CD4-positive, alpha-beta T cell (primary cell): ENCODE measurements at regions of chr7 and their contacts with region 1.

Region 1: DNA sequence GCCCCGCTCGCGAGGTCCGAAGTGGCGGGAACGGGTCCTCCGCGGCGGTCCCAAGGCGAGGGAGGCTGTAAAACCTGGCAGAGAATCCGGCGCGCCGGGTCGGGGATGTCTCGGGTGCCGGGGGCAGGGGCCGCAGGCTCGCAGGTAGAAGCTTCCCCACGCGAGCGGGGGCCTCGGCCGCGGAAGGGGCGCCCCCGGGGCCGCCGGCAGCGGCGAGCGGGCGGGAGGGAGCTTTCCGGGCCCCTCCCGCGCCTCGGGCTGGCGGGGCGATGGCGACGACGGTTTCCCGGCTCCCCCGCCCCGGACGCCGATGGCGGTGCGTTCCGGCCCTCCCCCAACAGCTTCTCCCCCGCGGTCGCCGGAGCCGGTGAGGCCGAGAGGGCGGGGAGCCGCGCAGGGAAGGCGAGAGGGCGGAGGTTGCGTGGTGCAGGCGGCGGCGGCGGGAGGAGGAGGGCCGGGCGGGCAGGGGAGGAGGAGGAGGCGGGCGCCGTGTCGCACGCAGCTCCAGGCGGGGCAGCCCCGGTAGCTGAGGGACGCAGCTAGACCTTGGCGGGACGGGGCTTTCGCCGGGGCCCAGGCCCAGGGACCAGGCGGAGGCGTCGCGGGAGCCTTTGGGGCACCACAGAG is at the start of gene CUL1:
- DNase-seq: peak; percentile 74 to 94 (median 85)
- ATAC-seq: peak; percentile 75
- H3K4me3 ChIP-seq: peak within 1 kb of the TSS; percentile 81
- H3K4me3 Mint-ChIP-seq: peak within 1 kb of the TSS; percentile 91
- H3K27ac ChIP-seq: peak within 1 kb of the TSS; percentile 47 to 73
- H3K27ac Mint-ChIP-seq: peak within 1 kb of the TSS; percentile 88
- H3K4me1 ChIP-seq: peaks cover 33% of the 10 kb centered on the region
- H3K4me1 Mint-ChIP-seq: peaks cover 51% of the 10 kb centered on the region
- H3K27me3 ChIP-seq: no peaks in the 10 kb centered on the region
- H3K27me3 Mint-ChIP-seq: no peaks in the 10 kb centered on the region
- CTCF ChIP-seq: no peak
- total RNA-seq, gene CUL1: 31.0 to 31.2 TPM

Region 2: GRCh38 chr7:148575640-148576411 is 122.7 kb before region 1 on chr7:
- CTCF ChIA-PET with region 1: no interaction called
- POLR2A ChIA-PET with region 1: interaction called, 11 read pairs
- intact Hi-C with region 1: loop called (anchors 2 to 5 kb)
- DNase-seq: peak; percentile 50 to 79 (median 64)
- ATAC-seq: peak; percentile 81
- H3K4me3 ChIP-seq: no peak overlapping the region
- H3K4me3 Mint-ChIP-seq: no peak overlapping the region
- H3K27ac ChIP-seq: no peak overlapping the region
- H3K27ac Mint-ChIP-seq: no peak overlapping the region
- H3K4me1 ChIP-seq: peaks cover 5% of the 10 kb centered on the region
- H3K4me1 Mint-ChIP-seq: peaks cover 4% of the 10 kb centered on the region
- H3K27me3 ChIP-seq: no peaks in the 10 kb centered on the region
- H3K27me3 Mint-ChIP-seq: no peaks in the 10 kb centered on the region
- CTCF ChIP-seq: peak; percentile 82

Region 3: DNA sequence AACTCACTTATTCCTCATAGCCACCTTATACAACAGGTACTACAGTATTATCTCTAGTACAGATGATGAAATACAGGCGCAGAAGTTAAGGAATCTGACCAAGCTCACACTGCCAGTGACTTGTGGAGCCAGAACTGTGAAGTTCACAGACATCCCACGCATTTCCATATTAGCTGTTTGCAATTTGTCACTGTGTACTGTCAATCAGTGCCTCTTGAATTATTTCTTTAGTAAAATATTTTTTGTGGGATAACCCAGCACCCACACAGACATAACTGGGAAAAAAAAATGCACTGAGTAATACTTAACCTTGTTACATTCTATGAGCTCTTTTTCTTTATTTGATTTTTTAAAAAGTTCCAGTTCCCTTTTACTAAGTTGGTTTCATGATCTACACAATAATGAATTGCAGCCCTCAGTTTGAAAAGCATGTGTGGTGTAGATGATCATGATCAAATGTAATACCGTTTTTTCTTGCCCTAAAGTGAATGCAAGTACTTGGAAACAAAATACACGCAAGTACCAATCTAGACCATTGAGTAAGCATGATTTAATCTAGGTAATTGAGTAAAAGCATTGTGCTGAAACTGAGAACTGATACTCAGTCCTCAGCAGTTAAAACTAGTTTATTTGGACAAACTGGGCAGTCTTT is 14.3 kb after region 1 on chr7:
- CTCF ChIA-PET with region 1: interaction called, 3 read pairs
- POLR2A ChIA-PET with region 1: interaction called, 15 read pairs
- intact Hi-C with region 1: loop called in 1 of 2 experiments (anchors 2 kb)
- DNase-seq: no peak
- ATAC-seq: no peak
- H3K4me3 ChIP-seq: no peak overlapping the region
- H3K4me3 Mint-ChIP-seq: no peak overlapping the region
- H3K27ac ChIP-seq: no peak overlapping the region
- H3K27ac Mint-ChIP-seq: peak overlapping the region; percentile 25
- H3K4me1 ChIP-seq: peaks cover 46% of the 10 kb centered on the region
- H3K4me1 Mint-ChIP-seq: peaks cover 94% of the 10 kb centered on the region
- H3K27me3 ChIP-seq: no peaks in the 10 kb centered on the region
- H3K27me3 Mint-ChIP-seq: no peaks in the 10 kb centered on the region
- CTCF ChIP-seq: no peak

Region 4: DNA sequence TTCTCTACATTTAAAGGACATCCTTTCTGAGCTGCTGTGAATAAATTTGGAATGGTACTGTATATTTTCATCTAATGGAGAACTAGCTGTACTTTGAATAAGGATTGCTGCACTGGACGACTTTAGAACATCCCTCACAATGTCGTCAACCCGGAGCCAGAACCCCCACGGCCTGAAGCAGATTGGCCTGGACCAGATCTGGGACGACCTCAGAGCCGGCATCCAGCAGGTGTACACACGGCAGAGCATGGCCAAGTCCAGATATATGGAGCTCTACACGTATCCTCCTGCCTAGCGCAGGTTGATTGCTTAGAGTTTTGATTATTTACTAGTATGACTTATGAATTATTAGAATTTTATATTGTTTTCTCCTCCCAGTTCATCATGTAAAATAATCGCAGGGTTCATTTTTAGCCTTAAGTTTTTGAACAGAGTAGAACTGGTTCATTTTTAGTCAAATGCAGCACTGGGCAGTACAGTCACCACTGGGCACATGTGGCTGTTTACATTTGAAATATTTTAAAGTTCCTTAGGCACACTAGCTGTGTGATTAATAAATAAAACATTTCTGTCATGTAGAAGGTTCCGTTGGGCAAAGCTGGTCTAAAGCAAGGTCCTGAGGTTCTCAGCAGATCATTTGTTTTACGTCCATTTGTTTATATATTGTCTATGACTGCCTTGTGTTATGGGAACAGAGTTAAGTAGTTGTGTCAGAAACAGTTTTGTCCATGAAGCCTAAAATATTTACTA is 31.6 kb after region 1 on chr7:
- CTCF ChIA-PET with region 1: no interaction called
- POLR2A ChIA-PET with region 1: interaction called, 10 read pairs
- intact Hi-C with region 1: loop called in 1 of 2 experiments (anchors 5 kb)
- DNase-seq: no peak
- ATAC-seq: no peak
- H3K4me3 ChIP-seq: no peak overlapping the region
- H3K4me3 Mint-ChIP-seq: no peak overlapping the region
- H3K27ac ChIP-seq: no peak overlapping the region
- H3K27ac Mint-ChIP-seq: no peak overlapping the region
- H3K4me1 ChIP-seq: peaks cover 14% of the 10 kb centered on the region
- H3K4me1 Mint-ChIP-seq: peaks cover 73% of the 10 kb centered on the region
- H3K27me3 ChIP-seq: no peaks in the 10 kb centered on the region
- H3K27me3 Mint-ChIP-seq: no peaks in the 10 kb centered on the region
- CTCF ChIP-seq: no peak

Region 5: DNA sequence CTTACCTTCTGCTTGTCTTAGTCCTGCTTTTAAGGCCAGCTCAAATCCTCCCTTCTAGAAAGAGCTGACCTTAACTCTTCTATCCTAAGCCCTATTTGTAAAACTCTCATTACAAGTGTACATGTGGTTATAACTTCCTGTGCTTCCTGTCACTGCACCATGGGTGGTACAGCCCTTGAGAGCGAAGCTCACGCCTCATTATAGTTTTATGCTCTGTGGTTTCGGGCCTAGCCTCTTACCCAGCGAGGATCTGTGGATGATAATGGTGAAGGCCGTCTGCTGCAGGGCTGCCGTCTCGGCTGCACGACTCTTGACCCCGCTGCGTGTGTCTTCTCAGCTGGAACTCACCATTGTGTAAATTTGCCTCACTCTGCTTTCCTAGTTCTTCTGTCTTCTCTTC is 74.8 kb after region 1 on chr7:
- CTCF ChIA-PET with region 1: interaction called, 4 read pairs
- POLR2A ChIA-PET with region 1: interaction called, 29 read pairs
- intact Hi-C with region 1: loop called in 1 of 2 experiments (anchors 5 kb)
- DNase-seq: peak in 12 of 14 experiments; percentile 7 to 73 (median 24)
- ATAC-seq: peak; percentile 92
- H3K4me3 ChIP-seq: no peak overlapping the region
- H3K4me3 Mint-ChIP-seq: peak overlapping the region; percentile 13
- H3K27ac ChIP-seq: peak overlapping the region; percentile 42 to 66
- H3K27ac Mint-ChIP-seq: peak overlapping the region; percentile 47
- H3K4me1 ChIP-seq: peaks cover 25% of the 10 kb centered on the region
- H3K4me1 Mint-ChIP-seq: peaks cover 29% of the 10 kb centered on the region
- H3K27me3 ChIP-seq: no peaks in the 10 kb centered on the region
- H3K27me3 Mint-ChIP-seq: no peaks in the 10 kb centered on the region
- CTCF ChIP-seq: no peak

Region 6: GRCh38 chr7:148940702-148941597 is 242.4 kb after region 1 on chr7:
- CTCF ChIA-PET with region 1: no interaction called
- POLR2A ChIA-PET with region 1: interaction called, 32 read pairs
- intact Hi-C with region 1: loop called in 1 of 2 experiments (anchors 5 kb)
- DNase-seq: peak; percentile 37 to 87 (median 57)
- ATAC-seq: peak; percentile 69
- H3K4me3 ChIP-seq: peak overlapping the region; percentile 89
- H3K4me3 Mint-ChIP-seq: peak overlapping the region; percentile 97
- H3K27ac ChIP-seq: peak overlapping the region; percentile 87 to 88
- H3K27ac Mint-ChIP-seq: peak overlapping the region; percentile 98
- H3K4me1 ChIP-seq: peaks cover 7% of the 10 kb centered on the region
- H3K4me1 Mint-ChIP-seq: peaks cover 27% of the 10 kb centered on the region
- H3K27me3 ChIP-seq: no peaks in the 10 kb centered on the region
- H3K27me3 Mint-ChIP-seq: no peaks in the 10 kb centered on the region
- CTCF ChIP-seq: no peak

Region 7: DNA sequence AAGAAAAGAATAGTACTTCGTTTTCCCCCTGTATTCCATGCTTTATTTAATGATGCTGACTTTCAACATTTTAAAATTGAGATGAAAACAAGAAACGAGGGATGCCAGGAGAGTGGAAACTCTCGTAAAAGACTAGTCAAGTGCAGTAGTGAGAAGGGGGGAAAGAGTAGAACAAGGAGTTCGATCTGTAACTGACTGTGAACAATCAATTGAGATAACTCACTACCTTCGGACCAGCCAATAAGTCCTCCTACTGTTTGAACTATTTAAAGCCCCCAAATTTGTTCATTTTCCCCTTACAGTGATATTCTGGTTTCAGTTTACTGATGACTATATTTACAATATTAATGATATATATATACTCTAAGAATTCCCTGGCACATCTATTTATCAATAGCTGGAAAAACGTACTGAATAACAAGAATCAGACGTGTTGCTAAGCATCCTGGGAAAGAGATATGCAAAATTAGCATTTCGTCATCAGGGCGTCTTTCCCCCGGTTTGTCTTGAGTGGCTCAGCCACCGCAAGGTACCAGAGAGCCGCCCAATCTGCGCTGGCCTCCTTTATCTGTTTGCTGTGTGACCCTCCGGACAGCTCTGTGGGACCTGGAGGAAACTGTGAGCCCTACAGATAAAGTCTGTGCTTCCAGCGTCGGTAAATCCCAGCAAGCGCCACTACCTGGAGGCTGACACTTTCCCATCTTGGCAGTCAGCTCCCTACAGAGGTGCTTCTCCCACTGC is 288.7 kb after region 1 on chr7:
- CTCF ChIA-PET with region 1: no interaction called
- POLR2A ChIA-PET with region 1: interaction called, 11 read pairs
- intact Hi-C with region 1: loop called in 1 of 2 experiments (anchors 5 kb)
- DNase-seq: peak; percentile 58 to 94 (median 70)
- ATAC-seq: peak; percentile 71
- H3K4me3 ChIP-seq: peak overlapping the region; percentile 95
- H3K4me3 Mint-ChIP-seq: peak overlapping the region; percentile 96
- H3K27ac ChIP-seq: peak overlapping the region; percentile 73 to 94
- H3K27ac Mint-ChIP-seq: peak overlapping the region; percentile 95
- H3K4me1 ChIP-seq: peaks cover 41% of the 10 kb centered on the region
- H3K4me1 Mint-ChIP-seq: peaks cover 55% of the 10 kb centered on the region
- H3K27me3 ChIP-seq: no peaks in the 10 kb centered on the region
- H3K27me3 Mint-ChIP-seq: peaks cover 5% of the 10 kb centered on the region
- CTCF ChIP-seq: no peak